ENCODE measurements at regions of chr19 and their contacts with region 1.

Region 1: GRCh38 chr19:49590071-49590970 is 661 bp upstream of the PRR12 start:
- DNase-seq: peak; percentile 96
- ATAC-seq: peak; percentile 81
- H3K4me3 Mint-ChIP-seq: peak overlapping the region; percentile 85
- H3K27ac Mint-ChIP-seq: peak overlapping the region; percentile 89
- H3K4me1 Mint-ChIP-seq: peaks cover 34% of the 10 kb centered on the region
- H3K27me3 Mint-ChIP-seq: no peaks in the 10 kb centered on the region
- CTCF ChIP-seq: no peak

Region 2: GRCh38 chr19:48965040-48965805 is 625.1 kb before region 1 on chr19 and contains the start of gene FTL:
- CTCF ChIA-PET with region 1: no interaction called
- POLR2A ChIA-PET with region 1: no interaction called
- intact Hi-C with region 1: loop called (anchors 2 kb)
- DNase-seq: peak; percentile 88
- ATAC-seq: peak; percentile 80
- H3K4me3 Mint-ChIP-seq: peak within 1 kb of the TSS; percentile 99
- H3K27ac Mint-ChIP-seq: peak within 1 kb of the TSS; percentile 99
- H3K4me1 Mint-ChIP-seq: peaks cover 70% of the 10 kb centered on the region
- H3K27me3 Mint-ChIP-seq: no peaks in the 10 kb centered on the region
- CTCF ChIP-seq: no peak
- total RNA-seq, gene FTL: 888 and 935 TPM in 2 replicates

Region 3: DNA sequence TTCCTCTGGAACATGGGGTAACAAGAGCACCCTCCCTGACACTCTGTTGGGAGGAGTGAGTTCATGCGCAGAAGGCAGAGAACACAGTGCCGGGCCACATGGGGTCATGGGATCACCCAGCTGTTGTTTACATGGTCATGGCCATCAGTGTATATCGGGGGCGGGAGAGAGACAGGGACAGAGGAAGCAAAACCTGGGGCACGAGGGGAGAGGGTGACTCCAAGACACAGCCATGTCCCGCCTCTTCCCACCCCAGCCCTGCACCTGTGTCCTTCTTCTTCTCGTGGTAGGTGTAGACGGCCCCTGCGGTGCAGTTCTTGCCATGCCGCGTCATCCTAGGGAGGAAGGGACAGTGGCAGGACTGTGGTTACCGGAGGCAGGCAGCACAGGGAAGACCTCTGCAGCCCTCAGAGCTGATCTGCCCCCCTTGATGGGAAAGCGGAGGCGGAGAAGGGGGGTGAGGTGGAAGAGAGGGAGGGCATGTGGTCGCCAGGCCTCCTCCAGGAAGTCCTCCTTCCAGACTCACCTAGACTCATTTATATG is 29.9 kb before region 1 on chr19:
- CTCF ChIA-PET with region 1: no interaction called
- POLR2A ChIA-PET with region 1: interaction called, 11 read pairs
- intact Hi-C with region 1: no loop called
- DNase-seq: no peak
- ATAC-seq: peak; percentile 57
- H3K4me3 Mint-ChIP-seq: no peak overlapping the region
- H3K27ac Mint-ChIP-seq: peak overlapping the region; percentile 41
- H3K4me1 Mint-ChIP-seq: peaks cover 40% of the 10 kb centered on the region
- H3K27me3 Mint-ChIP-seq: no peaks in the 10 kb centered on the region
- CTCF ChIP-seq: no peak

Region 4: DNA sequence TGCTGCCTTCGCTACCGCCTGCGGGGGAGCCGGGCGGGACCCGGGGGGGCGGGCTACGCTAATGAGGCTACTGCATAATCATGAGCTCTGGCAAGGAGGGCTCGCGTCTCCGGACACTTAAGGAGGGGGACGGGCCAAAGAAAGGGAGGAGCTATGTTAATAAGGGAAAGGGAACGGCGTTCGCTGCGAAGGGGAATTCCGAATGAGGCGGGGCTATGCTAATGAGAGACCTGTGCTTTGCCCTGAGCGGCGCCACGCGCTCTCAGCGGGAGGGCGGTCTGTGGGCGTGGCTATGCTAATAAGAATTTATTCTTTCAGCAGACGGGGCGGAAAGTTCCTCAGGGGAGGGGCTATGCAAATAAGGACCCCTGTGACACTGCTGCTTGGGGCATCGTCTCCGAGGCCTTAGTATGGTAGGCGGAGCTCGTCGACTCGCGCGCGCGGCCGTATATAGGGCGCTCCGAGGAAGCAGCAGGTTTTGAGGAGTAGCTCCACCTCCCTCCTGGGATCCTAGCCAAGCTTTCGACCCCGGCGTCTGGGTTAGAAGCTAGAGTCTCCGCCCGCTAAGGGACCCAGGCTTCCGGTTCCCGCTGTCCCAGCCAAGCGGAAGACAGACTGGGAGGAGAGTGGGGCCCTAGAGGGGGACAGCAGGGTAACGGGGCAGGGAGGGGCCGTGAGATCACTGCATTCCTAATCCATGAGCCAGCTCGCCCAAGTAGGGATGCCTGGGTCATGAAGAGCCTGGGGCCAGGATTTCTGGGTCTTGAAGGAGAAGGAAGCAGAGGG is 50.0 kb after region 1 on chr19 and contains the start of gene RRAS:
- CTCF ChIA-PET with region 1: interaction called, 3 read pairs
- POLR2A ChIA-PET with region 1: interaction called, 63 read pairs
- intact Hi-C with region 1: loop called (anchors 1 kb)
- DNase-seq: peak; percentile 97
- ATAC-seq: peak; percentile 69
- H3K4me3 Mint-ChIP-seq: peak within 1 kb of the TSS; percentile 93
- H3K27ac Mint-ChIP-seq: peak within 1 kb of the TSS; percentile 96
- H3K4me1 Mint-ChIP-seq: peaks cover 59% of the 10 kb centered on the region
- H3K27me3 Mint-ChIP-seq: no peaks in the 10 kb centered on the region
- CTCF ChIP-seq: no peak
- total RNA-seq, gene RRAS: 4.8 and 5.1 TPM in 2 replicates

Region 5: DNA sequence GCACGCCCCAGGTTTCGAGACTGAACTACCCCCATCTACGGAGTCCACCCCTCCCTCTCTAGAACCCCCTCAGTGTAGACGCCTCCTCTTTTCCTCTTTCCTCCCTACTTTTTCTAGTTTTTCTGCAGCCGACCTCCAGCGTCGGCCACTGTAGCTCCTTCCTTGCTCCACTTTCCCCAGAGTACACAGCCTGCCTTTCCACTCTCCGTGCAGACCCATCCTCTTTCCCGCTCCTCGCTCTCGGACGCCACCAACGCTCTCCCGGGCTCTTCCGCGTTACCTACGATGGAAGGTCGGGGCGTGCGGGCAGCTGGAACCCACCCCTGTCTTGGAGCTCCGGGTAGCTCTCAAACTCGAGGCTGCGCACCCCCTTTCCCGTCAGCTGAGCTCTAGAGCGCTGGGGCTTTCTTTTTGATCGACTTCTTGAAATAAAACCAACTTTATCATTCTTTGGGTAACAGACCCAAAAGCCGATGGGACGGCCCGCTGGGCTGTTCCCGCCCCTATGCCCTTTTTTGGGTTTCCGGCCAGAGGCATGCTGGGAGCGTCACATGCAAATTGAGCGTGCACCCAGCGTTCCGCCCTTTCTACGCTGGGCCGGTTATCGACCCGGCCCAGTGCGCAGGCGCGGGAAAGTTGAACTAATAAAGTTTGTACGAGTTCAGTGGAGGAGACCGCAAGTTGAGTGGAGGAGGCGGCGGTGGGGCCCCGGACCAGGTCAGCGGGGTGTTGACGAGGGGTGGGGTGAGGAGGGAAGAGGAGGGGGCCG is 75.2 kb after region 1 on chr19 and contains the starts of genes BCL2L12 and IRF3:
- CTCF ChIA-PET with region 1: no interaction called
- POLR2A ChIA-PET with region 1: interaction called, 12 read pairs
- intact Hi-C with region 1: loop called (anchors 2 kb)
- DNase-seq: peak; percentile 99
- ATAC-seq: peak; percentile 86
- H3K4me3 Mint-ChIP-seq: peak within 1 kb of the TSS; percentile 98
- H3K27ac Mint-ChIP-seq: peak within 1 kb of the TSS; percentile 95
- H3K4me1 Mint-ChIP-seq: peaks cover 40% of the 10 kb centered on the region
- H3K27me3 Mint-ChIP-seq: no peaks in the 10 kb centered on the region
- CTCF ChIP-seq: no peak
- total RNA-seq, gene BCL2L12: 30.7 and 39.1 TPM in 2 replicates
- total RNA-seq, gene IRF3: 145 and 171 TPM in 2 replicates

Region 6: DNA sequence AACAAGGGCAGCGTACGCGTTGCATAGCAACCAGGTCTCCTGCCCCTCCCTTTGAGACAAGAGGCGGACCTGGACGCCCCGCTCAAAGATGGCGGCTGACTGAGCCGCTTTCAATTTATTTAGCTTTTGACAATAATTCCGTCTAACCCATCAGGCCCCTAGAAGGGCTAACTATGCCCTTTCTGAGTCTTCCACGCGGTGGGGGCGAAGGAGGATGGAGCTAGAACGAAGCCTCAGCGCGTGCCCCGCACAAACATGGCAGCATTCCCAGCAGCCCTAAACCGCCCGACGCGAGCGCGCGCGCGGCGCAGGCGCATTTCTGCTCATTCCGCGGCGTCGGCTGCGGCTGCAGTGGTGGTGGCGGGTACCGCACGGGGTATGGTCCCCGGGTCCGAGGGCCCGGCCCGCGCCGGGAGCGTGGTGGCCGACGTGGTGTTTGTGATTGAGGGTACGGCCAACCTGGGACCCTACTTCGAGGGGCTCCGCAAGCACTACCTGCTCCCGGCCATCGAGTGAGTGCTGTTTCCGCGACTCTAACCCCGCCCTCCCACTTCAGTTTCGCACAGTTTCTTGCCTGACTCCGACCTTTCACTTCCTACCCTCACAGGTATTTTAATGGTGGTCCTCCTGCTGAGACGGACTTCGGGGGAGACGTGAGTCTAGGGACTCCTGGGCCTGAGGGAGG is 227.8 kb after region 1 on chr19 and contains the start of gene MED25:
- CTCF ChIA-PET with region 1: no interaction called
- POLR2A ChIA-PET with region 1: no interaction called
- intact Hi-C with region 1: loop called (anchors 2 kb)
- DNase-seq: peak; percentile 91
- ATAC-seq: peak; percentile 59
- H3K4me3 Mint-ChIP-seq: peak within 1 kb of the TSS; percentile 98
- H3K27ac Mint-ChIP-seq: peak within 1 kb of the TSS; percentile 99
- H3K4me1 Mint-ChIP-seq: peaks cover 40% of the 10 kb centered on the region
- H3K27me3 Mint-ChIP-seq: no peaks in the 10 kb centered on the region
- CTCF ChIP-seq: no peak
- total RNA-seq, gene MED25: 70.1 and 88.8 TPM in 2 replicates

Region 7: GRCh38 chr19:50025024-50025789 is 434.9 kb after region 1 on chr19 and contains the start of gene VRK3:
- CTCF ChIA-PET with region 1: no interaction called
- POLR2A ChIA-PET with region 1: no interaction called
- intact Hi-C with region 1: loop called (anchors 5 kb)
- DNase-seq: peak; percentile 95
- ATAC-seq: peak; percentile 87
- H3K4me3 Mint-ChIP-seq: peak within 1 kb of the TSS; percentile 97
- H3K27ac Mint-ChIP-seq: peak within 1 kb of the TSS; percentile 100
- H3K4me1 Mint-ChIP-seq: peaks cover 46% of the 10 kb centered on the region
- H3K27me3 Mint-ChIP-seq: no peaks in the 10 kb centered on the region
- CTCF ChIP-seq: no peak
- total RNA-seq, gene VRK3: 71.1 and 82.6 TPM in 2 replicates